Panc1 (cell line): ENCODE measurements at regions of chr14 and their contacts with region 1.

Region 1: DNA sequence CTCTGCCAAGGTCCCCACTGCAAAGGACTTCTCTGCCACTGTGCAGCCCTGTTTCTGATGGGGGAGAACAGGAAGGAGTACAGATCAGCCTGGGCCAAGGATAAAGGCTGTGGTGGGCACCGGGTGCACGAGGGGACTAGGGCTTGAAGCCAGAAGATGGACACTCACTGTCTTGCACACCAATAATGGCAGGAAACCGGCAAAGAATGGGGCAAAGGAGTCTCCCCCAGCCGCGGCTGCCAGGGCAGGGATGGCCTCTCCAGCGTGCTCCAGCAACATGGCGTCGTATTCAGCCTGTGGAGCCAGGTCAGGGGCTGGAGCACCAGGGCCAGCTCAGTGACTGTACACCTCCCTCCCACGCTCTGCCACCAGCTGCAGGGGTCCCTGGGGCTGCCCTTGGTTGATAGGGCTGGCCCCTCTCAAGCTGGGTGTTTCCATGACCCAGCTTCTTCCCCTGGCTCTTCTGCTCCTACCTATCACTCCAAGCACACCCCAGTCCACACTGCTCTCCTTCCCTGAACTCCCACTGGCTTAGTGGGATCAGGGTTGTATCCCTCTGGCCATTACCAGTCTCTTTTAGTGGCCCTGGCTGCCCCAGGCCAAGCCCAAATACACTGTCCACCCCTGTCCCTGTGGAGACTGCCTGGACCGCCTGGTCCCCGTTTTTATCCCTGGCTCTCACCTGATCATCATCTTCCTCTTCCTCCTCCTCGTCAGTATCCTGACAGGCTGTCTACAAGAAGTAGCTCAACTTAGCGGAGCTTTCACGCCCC is 6.3 kb downstream of the IPO4 start:
- DNase-seq: no peak
- ATAC-seq: no peak
- H3K4me3 ChIP-seq: no peak overlapping the region
- H3K27ac ChIP-seq: no peak overlapping the region
- H3K4me1 ChIP-seq: no peaks in the 10 kb centered on the region; the same call in 1 of the 2 replicates
- H3K27me3 ChIP-seq: no peaks in the 10 kb centered on the region
- CTCF ChIP-seq: no peak

Region 2: GRCh38 chr14:24212924-24213865 is 30.9 kb after region 1 on chr14 and contains the start of gene CHMP4A:
- CTCF ChIA-PET with region 1: no interaction called
- POLR2A ChIA-PET with region 1: no interaction called
- in situ Hi-C with region 1: no loop called
- intact Hi-C with region 1: no loop called
- DNase-seq: peak; percentile 73
- ATAC-seq: peak; percentile 96
- H3K4me3 ChIP-seq: peak within 1 kb of the TSS; percentile 72 to 84
- H3K27ac ChIP-seq: peak within 1 kb of the TSS; percentile 96
- H3K4me1 ChIP-seq: peaks cover 9% of the 10 kb centered on the region
- H3K27me3 ChIP-seq: no peaks in the 10 kb centered on the region
- CTCF ChIP-seq: no peak
- total RNA-seq, gene CHMP4A: 42.4 TPM

Region 3: GRCh38 chr14:24224618-24225071 is 42.3 kb after region 1 on chr14:
- CTCF ChIA-PET with region 1: no interaction called
- POLR2A ChIA-PET with region 1: interaction called, 11 read pairs
- in situ Hi-C with region 1: no loop called
- intact Hi-C with region 1: no loop called
- DNase-seq: no peak
- ATAC-seq: peak; percentile 63; the same call in 1 of the 2 replicates
- H3K4me3 ChIP-seq: no peak overlapping the region
- H3K27ac ChIP-seq: no peak overlapping the region
- H3K4me1 ChIP-seq: no peaks in the 10 kb centered on the region
- H3K27me3 ChIP-seq: no peaks in the 10 kb centered on the region
- CTCF ChIP-seq: no peak